ENCODE measurements at regions of chr15 and their contacts with region 1.

Region 1: GRCh38 chr15:92881802-92882696 is 18.1 kb upstream of the CHD2 start:
- DNase-seq: peak; percentile 100
- H3K4me3 ChIP-seq: peak overlapping the region; percentile 45
- H3K27ac ChIP-seq: peak overlapping the region; percentile 60
- H3K27me3 ChIP-seq: no peaks in the 10 kb centered on the region
- CTCF ChIP-seq: no peak

Region 2: GRCh38 chr15:92810418-92811138 is 71.5 kb before region 1 on chr15:
- in situ Hi-C with region 1: loop called (anchors 10 kb)
- DNase-seq: peak; percentile 53
- H3K4me3 ChIP-seq: peak overlapping the region; percentile 46
- H3K27ac ChIP-seq: peak overlapping the region; percentile 94
- H3K27me3 ChIP-seq: no peaks in the 10 kb centered on the region
- CTCF ChIP-seq: no peak

Region 3: GRCh38 chr15:94186770-94187331 is 1304.8 kb after region 1 on chr15:
- in situ Hi-C with region 1: no loop called
- DNase-seq: no peak
- H3K4me3 ChIP-seq: no peak overlapping the region
- H3K27ac ChIP-seq: no peak overlapping the region
- H3K27me3 ChIP-seq: no peaks in the 10 kb centered on the region
- CTCF ChIP-seq: no peak

Measured in brain microvascular endothelial cell (primary cell).